H1 (cell line): ENCODE measurements at regions of chr17 and their contacts with region 1.

Region 1: GRCh38 chr17:27430882-27431491 is 25.3 kb upstream of the KSR1 start:
- DNase-seq: peak; percentile 33 to 61
- H3K4me3 ChIP-seq: no peak overlapping the region
- H3K27ac ChIP-seq: no peak overlapping the region
- H3K4me1 ChIP-seq: no peaks in the 10 kb centered on the region; a peak in 1 of 7 replicates
- H3K27me3 ChIP-seq: no peaks in the 10 kb centered on the region
- CTCF ChIP-seq: peak; percentile 60 to 77 (median 75)
- EP300 ChIP-seq: no peak
- POLR2A ChIP-seq: no peak
- RAD21 ChIP-seq: peak; percentile 40 to 54

Region 2: DNA sequence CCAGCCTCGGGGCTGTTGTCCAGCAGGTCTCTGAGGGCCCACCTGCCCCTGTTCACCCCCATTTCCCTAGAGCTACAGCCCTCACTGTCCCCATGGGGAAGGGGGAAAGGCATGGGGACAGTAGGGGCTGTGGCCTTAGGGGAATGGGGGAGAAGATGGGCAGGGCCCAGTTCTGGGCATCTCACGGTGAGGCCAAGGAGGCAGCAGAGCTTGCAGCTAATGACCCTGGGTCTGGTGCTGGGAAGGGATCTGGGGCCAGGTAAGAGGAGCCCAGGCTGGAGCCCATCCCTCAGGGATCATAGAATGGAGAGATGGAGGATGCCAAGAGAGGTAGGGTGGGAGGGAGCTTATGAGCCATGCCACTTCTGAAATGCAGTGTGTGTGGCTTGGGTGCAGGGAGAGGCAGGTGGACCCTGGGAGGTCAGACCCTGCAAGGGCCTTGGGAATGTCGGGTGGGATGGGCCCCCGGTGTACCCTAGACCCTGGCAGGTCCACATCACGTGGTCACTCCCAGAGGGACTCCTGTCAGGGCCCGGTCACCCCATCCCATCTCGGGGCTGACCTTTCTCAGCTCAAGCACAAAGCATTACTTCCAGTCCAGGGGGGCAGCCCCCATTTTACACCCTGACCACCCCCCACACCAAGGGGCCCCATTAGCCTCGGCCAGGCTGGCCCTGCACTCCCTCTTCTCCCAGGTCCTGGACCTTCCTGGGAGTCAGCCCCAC is 10.6 kb before region 1 on chr17:
- CTCF ChIA-PET with region 1: interaction called, 11 read pairs
- POLR2A ChIA-PET with region 1: no interaction called
- DNase-seq: no peak
- H3K4me3 ChIP-seq: no peak overlapping the region
- H3K27ac ChIP-seq: no peak overlapping the region
- H3K4me1 ChIP-seq: no peaks in the 10 kb centered on the region; a peak in 1 of 7 replicates
- H3K27me3 ChIP-seq: no peaks in the 10 kb centered on the region; a peak in 1 of 7 replicates
- CTCF ChIP-seq: no peak
- EP300 ChIP-seq: no peak
- POLR2A ChIP-seq: no peak
- RAD21 ChIP-seq: no peak

Region 3: DNA sequence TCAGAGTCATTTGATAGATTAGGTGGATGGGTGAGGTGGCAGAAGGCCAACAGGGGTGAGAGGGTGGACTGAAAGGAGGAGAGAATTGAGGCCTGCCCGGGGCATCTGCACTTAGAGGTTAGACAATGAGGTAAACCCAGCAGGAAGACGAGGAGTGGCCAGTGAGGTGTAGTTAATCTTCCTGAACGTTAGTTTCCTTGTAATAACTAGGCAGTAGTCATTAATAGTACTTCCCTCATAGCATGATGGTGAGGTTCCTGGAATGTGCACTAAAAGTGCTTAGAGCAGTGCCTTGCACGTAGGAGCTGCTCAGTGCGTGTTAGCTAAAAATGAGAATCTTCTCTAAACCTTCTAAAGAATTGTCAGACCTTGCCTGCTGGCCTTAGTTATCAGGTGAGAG is 11.7 kb after region 1 on chr17:
- CTCF ChIA-PET with region 1: interaction called, 15 read pairs
- POLR2A ChIA-PET with region 1: no interaction called
- DNase-seq: no peak
- H3K4me3 ChIP-seq: no peak overlapping the region
- H3K27ac ChIP-seq: no peak overlapping the region
- H3K4me1 ChIP-seq: no peaks in the 10 kb centered on the region
- H3K27me3 ChIP-seq: no peaks in the 10 kb centered on the region
- CTCF ChIP-seq: no peak
- EP300 ChIP-seq: no peak
- POLR2A ChIP-seq: no peak
- RAD21 ChIP-seq: no peak

Region 4: DNA sequence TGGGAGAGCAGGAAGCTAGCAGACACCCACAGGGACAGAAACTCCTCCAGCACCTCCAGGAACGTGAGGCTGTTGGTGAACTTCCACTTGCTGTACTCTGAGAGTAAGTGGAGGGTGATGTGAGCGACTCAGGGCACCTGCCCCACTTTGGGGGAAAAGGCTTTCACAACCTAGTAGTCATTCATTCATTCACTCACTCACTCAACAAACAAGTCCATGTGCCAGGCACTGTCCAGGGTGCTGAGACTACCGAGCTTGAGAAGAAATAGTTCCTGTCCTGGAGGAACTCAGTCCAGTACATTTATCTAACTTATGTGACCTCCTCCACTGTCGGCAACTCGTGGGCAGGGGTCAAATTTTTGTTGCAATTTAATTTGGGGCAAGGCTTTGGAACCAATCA is 226.6 kb after region 1 on chr17:
- CTCF ChIA-PET with region 1: no interaction called
- POLR2A ChIA-PET with region 1: no interaction called
- DNase-seq: no peak
- H3K4me3 ChIP-seq: no peak overlapping the region
- H3K27ac ChIP-seq: no peak overlapping the region
- H3K4me1 ChIP-seq: no peaks in the 10 kb centered on the region
- H3K27me3 ChIP-seq: no peaks in the 10 kb centered on the region
- CTCF ChIP-seq: no peak
- EP300 ChIP-seq: no peak
- POLR2A ChIP-seq: no peak
- RAD21 ChIP-seq: no peak